Activated T-helper 1 cell treated with anti-CD3 and anti-CD28 coated beads, Interleukin-12 subunit alpha, Interleukin-12 subunit beta, Interleukin-2, Interleukin-4 antibody, amounts not matched to agents 30 ng/mL and 10 ng/mL and 1 ng/mL, durations not matched to agents 14 hours and 24 hours and 36 hours (primary cell): ENCODE measurements at regions of chr14 and their contacts with region 1.

Region 1: GRCh38 chr14:70887207-70887681 is 20.0 kb upstream of the PCNX1 start:
- DNase-seq: no peak
- H3K4me3 Mint-ChIP-seq: peak overlapping the region; percentile 73
- H3K27ac Mint-ChIP-seq: peak overlapping the region; percentile 88
- H3K4me1 Mint-ChIP-seq: peaks cover 98% of the 10 kb centered on the region
- H3K27me3 Mint-ChIP-seq: no peaks in the 10 kb centered on the region

Region 2: DNA sequence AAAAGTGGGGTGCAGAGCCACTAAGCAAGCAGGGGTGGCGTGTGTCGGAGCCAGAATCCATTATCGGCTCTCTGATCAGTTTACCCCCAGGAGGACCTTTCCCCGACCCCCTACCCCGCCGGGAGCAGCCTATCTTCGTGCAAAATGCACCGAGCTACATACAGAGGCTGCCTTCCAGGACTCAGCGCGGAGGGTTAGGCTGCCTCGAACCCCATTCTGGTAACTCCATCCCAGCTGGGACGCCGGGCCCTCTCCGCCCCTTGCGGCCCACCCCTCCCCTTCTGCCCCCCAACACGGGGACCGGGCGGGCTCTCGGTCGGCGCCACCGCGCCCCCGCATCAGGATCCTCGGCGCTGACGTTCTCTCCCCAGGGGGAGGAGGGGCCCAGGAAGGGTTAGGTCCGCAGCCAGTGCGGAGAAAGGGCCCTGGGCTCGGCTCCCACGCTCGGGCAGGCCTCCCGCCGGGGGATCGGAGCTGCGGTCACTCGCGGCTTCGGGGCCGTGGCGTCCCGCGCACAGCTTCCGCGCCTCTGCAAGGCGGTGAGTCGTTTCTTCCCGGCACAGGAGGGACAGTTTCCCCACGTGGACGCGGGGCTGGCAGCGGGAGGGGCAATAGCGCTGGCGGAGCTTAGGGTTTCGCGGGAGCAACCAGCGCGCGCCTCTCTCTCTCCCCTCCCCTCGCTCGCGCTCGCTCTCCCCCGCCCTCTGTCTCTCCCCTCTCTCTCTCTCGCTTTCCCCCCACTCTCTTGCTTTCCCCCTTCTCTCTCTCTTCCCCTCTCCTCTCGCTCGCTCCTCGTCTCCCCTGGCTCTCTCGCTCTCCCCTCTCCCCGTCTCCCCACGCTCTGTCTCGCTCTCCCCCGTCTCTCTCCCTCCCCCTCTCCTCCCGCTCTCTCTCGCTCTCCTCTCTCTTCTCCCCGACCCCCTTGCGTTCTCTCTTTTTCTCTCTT is 65.4 kb before region 1 on chr14:
- intact Hi-C with region 1: loop called (anchors 1 kb)
- DNase-seq: peak; percentile 48
- H3K4me3 Mint-ChIP-seq: peak overlapping the region; percentile 69
- H3K27ac Mint-ChIP-seq: peak overlapping the region; percentile 61
- H3K4me1 Mint-ChIP-seq: peaks cover 24% of the 10 kb centered on the region
- H3K27me3 Mint-ChIP-seq: peaks cover 3% of the 10 kb centered on the region

Region 3: DNA sequence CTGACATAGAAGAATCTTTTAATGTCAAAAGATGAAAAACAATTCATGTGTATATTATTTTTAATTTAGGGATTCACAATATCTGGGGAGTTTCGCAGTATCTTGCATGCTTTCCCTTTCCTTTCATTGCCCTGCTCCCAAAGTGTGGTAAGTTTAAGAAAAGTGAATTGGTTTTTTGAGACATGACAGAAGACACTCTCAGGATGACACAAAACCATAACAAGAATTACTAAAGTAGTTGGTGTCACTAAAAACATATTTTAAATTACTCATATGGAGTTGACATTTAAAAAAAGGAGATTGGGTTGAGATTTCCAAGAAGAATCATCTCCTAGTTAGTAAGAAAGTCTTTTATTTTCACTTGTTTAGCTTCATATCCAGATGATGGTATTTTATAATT is 14.9 kb after region 1 on chr14:
- intact Hi-C with region 1: loop called (anchors 1 kb)
- DNase-seq: no peak
- H3K4me3 Mint-ChIP-seq: no peak overlapping the region
- H3K27ac Mint-ChIP-seq: peak overlapping the region; percentile 29
- H3K4me1 Mint-ChIP-seq: peaks cover 55% of the 10 kb centered on the region
- H3K27me3 Mint-ChIP-seq: peaks cover 4% of the 10 kb centered on the region

Region 4: GRCh38 chr14:70934502-70935134 is 47.4 kb after region 1 on chr14:
- intact Hi-C with region 1: loop called (anchors 2 kb)
- DNase-seq: no peak
- H3K4me3 Mint-ChIP-seq: peak overlapping the region; percentile 53
- H3K27ac Mint-ChIP-seq: peak overlapping the region; percentile 67
- H3K4me1 Mint-ChIP-seq: peaks cover 62% of the 10 kb centered on the region
- H3K27me3 Mint-ChIP-seq: no peaks in the 10 kb centered on the region

Region 5: GRCh38 chr14:71314712-71315111 is 427.5 kb after region 1 on chr14:
- intact Hi-C with region 1: no loop called
- DNase-seq: no peak
- H3K4me3 Mint-ChIP-seq: no peak overlapping the region
- H3K27ac Mint-ChIP-seq: no peak overlapping the region
- H3K4me1 Mint-ChIP-seq: peaks cover 17% of the 10 kb centered on the region
- H3K27me3 Mint-ChIP-seq: peaks cover 10% of the 10 kb centered on the region

Region 6: DNA sequence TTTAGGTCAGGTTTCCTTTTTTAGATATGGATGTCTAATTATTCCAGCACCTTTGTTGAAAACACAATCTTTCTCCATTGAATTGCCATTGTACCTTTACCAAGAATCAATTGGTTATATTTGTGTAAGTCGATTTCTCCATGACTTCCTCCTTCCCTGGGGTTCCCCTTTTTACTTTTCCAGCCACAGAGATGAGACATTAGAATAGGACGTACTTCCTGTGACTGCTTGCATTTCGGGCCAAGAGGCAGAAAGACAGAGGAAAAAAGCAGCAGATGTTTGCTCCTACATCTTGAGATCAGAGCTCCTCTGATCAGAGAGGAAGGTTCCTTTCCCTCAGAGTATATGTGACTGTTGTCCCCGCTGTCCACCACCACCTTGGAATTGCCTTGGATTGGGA is 591.3 kb after region 1 on chr14:
- intact Hi-C with region 1: loop called (anchors 10 kb)
- DNase-seq: no peak
- H3K4me3 Mint-ChIP-seq: peak overlapping the region; percentile 63
- H3K27ac Mint-ChIP-seq: peak overlapping the region; percentile 87
- H3K4me1 Mint-ChIP-seq: peaks cover 55% of the 10 kb centered on the region
- H3K27me3 Mint-ChIP-seq: no peaks in the 10 kb centered on the region